ENCODE measurements at regions of chr15 and their contacts with region 1.

Region 1: GRCh38 chr15:73633111-73633990 is at the start of gene NPTN:
- DNase-seq: peak; percentile 98 to 99 (median 99)
- H3K4me3 ChIP-seq: peak within 1 kb of the TSS; percentile 91
- H3K27ac ChIP-seq: peak within 1 kb of the TSS; percentile 77 to 80
- H3K4me1 ChIP-seq: peaks cover 6% of the 10 kb centered on the region
- H3K27me3 ChIP-seq: no peaks in the 10 kb centered on the region
- CTCF ChIP-seq: no peak
- EP300 ChIP-seq: no peak
- POLR2A ChIP-seq: peak; percentile 26
- total RNA-seq, gene NPTN: 39.2 to 97.7 (median 80.6) TPM

Region 2: GRCh38 chr15:72783563-72784237 is 849.7 kb before region 1 on chr15 and contains the start of gene ADPGK:
- intact Hi-C with region 1: loop called in 1 of 4 experiments (anchors 10 kb)
- DNase-seq: peak; percentile 87 to 96 (median 93)
- H3K4me3 ChIP-seq: peak within 1 kb of the TSS; percentile 82
- H3K27ac ChIP-seq: peak within 1 kb of the TSS; percentile 79 to 94
- H3K4me1 ChIP-seq: peaks cover 10% of the 10 kb centered on the region
- H3K27me3 ChIP-seq: no peaks in the 10 kb centered on the region
- CTCF ChIP-seq: peak in 1 of 3 donors; percentile 45
- EP300 ChIP-seq: peak; percentile 35
- POLR2A ChIP-seq: peak; percentile 83
- total RNA-seq, gene ADPGK: 20.3 to 46.1 (median 28.1) TPM

Region 3: GRCh38 chr15:73560501-73561117 is 72.7 kb before region 1 on chr15:
- intact Hi-C with region 1: loop called (anchors 5 to 10 kb)
- DNase-seq: no peak
- H3K4me3 ChIP-seq: no peak overlapping the region
- H3K27ac ChIP-seq: no peak overlapping the region
- H3K4me1 ChIP-seq: no peaks in the 10 kb centered on the region
- H3K27me3 ChIP-seq: no peaks in the 10 kb centered on the region
- CTCF ChIP-seq: peak in 1 of 3 donors; percentile 46
- EP300 ChIP-seq: no peak
- POLR2A ChIP-seq: no peak

Region 4: DNA sequence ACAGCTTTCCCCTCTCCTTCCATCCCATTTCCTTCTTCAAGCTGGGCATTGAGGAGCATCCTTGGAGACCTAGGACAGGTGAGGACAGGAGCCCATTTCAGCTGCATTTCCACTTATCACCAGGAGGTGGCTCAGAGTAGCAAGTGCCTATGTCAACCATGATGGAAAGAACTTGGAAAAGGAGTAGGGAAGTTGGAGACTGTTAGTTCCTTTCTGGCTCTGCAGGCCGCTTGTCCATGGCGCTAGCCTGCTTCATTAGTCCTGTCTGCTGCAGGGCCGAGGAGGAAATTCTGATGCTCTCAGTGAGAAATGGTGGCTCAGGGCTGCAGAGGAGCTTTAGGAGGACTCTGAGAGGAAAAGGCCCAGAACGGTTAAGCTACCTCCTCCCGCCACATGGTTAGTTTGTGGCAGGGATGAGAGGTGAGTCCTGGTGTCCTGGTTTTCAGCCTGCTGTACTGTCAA is 43.8 kb after region 1 on chr15:
- intact Hi-C with region 1: loop called in 1 of 4 experiments (anchors 5 kb)
- DNase-seq: peak; percentile 55 to 80 (median 65)
- H3K4me3 ChIP-seq: no peak overlapping the region
- H3K27ac ChIP-seq: no peak overlapping the region
- H3K4me1 ChIP-seq: no peaks in the 10 kb centered on the region
- H3K27me3 ChIP-seq: no peaks in the 10 kb centered on the region
- CTCF ChIP-seq: peak; percentile 67 to 88 (median 83)
- EP300 ChIP-seq: no peak
- POLR2A ChIP-seq: no peak